ENCODE measurements at regions of chr1 and their contacts with region 1.

Region 1: GRCh38 chr1:116485071-116485735 is 85.6 kb downstream of the CD58 start:
- DNase-seq: peak; percentile 83 to 91 (median 89)
- H3K4me3 ChIP-seq: no peak overlapping the region
- H3K27ac ChIP-seq: peak overlapping the region in 20 of 59 donors; percentile 8 to 71 (median 41)
- H3K27me3 ChIP-seq: no peaks in the 10 kb centered on the region
- CTCF ChIP-seq: peak; percentile 88 to 100 (median 97)

Region 2: DNA sequence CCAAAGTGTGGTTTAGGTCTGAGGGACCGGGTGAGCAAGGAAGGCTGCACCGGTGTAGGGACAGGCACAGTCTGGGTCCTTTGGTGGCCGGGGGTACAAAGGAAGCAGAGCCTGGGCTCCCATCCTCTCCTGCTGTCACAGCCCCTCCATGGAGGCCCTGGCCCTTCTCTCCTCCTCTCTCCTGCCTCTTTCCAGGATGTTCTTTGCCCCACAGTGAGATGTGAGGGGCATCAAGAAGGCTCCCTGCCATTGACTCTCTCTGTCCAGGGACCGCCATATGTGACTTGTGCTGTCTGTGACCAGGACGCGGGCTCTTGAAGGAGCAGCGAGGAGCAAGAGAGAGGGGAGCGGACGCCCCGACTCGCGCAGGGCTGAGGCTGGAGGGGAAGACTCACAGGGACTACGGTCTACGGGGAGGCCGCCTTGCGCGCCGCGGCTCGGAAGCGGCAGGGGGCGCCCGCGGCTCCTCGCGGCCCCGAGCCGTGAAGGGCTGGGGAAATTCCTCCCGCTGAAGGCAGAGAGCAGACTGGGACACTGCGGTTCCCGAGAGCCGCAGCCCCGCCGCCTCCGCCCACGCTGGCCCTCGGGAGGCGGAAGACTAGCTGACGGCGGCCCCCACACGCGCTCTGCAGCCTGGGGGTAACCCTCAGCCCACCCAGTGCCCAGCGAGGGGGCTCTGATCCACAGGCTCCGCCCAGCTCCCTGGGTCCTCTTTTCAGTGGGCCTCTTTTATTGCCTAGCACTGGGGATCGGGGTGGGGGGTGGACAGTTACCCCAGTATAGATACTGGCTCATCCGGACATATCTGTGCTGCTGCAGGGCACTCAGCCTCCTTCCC is 333.2 kb before region 1 on chr1:
- intact Hi-C with region 1: loop called (anchors 5 kb)
- DNase-seq: peak in 9 of 10 donors; percentile 60 to 88 (median 76)
- H3K4me3 ChIP-seq: peak overlapping the region; percentile 29 to 73 (median 59)
- H3K27ac ChIP-seq: peak overlapping the region; percentile 66 to 97 (median 88)
- H3K27me3 ChIP-seq: no peaks in the 10 kb centered on the region
- CTCF ChIP-seq: peak; percentile 71 to 98 (median 94)

Region 3: DNA sequence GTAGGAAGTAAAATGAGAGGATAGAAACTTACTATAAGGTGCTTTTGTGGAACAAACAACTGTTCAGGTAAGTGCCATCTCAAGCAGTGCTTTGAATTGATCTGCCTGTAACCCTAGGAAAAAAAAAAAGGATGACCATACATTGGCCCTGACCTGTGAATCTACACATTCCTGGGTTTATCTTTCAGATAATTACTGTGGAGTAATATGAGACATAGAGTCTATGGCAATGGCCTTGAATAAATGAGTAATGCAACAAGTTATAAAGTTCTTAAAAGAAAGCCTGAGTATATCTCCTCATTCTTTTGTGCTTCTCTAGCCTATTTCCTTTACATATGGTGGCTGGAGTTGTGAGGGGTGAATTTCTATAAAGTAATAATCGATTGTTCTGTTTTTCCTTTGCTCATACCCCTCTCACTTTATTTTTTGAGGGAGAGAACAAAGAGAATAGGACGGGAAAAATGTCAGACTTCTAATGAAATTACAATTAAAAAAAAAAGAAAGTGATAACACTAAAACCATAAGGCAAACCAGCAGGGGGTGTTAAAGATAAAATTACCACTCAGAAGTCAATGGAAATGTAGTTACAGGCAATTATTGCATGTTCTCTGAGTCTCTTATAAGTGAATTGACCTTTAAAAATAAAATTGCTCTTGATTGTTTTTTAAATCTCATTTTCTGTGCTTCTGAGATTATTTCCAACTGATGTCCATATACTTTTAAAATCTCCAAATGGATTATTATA is 124.6 kb before region 1 on chr1:
- intact Hi-C with region 1: loop called in 1 of 2 experiments (anchors 5 kb)
- DNase-seq: no peak
- H3K4me3 ChIP-seq: no peak overlapping the region
- H3K27ac ChIP-seq: peak overlapping the region in 7 of 59 donors; percentile 2 to 63 (median 24)
- H3K27me3 ChIP-seq: no peaks in the 10 kb centered on the region
- CTCF ChIP-seq: peak in 53 of 56 donors; percentile 25 to 72 (median 48)

Region 4: GRCh38 chr1:116377541-116378529 is 107.4 kb before region 1 on chr1:
- intact Hi-C with region 1: loop called (anchors 5 kb)
- DNase-seq: peak; percentile 53 to 90 (median 77)
- H3K4me3 ChIP-seq: peak overlapping the region in 58 of 59 donors; percentile 1 to 97 (median 87)
- H3K27ac ChIP-seq: peak overlapping the region; percentile 45 to 99 (median 95)
- H3K27me3 ChIP-seq: no peaks in the 10 kb centered on the region
- CTCF ChIP-seq: peak in 3 of 56 donors; percentile 9 to 13 (median 10)

Region 5: DNA sequence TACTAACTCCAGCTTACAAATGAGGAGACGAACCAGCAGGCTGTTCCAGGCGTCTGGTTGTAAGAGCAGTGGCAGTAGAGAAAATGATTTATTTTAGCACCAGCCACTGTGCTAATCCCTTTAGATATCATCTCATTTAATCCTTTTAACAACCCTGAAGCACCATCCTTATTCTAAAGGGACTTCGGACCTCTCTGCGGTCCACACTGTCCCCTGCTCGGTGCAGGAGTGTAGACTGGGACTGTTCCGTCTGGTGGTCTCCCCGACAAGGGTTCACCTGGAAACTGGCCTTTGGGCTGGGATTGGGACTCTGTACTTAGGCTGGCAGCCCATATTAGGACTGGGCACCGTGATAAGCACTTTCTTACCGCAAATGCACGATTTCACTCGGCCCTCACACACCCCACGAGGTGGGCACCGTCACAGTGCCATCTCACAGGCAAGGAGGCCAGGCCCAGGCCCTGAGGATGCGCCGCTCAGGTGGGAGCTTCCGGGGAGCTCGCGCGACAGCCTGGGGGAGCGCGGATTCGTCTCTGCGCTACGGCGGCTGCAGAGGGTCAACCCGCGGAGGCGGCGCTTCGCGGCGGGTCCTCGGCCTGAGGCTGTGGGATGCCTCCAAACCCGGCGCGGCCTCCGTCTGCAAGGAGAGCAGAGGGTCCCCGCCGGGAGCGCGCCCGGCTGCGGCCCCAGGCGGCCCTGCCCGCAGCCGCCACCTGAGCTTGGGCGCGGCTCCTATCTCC is 66.9 kb before region 1 on chr1:
- intact Hi-C with region 1: loop called in 1 of 2 experiments (anchors 5 kb)
- DNase-seq: peak; percentile 70 to 89 (median 76)
- H3K4me3 ChIP-seq: peak overlapping the region; percentile 60 to 95 (median 82)
- H3K27ac ChIP-seq: peak overlapping the region; percentile 48 to 98 (median 94)
- H3K27me3 ChIP-seq: no peaks in the 10 kb centered on the region
- CTCF ChIP-seq: peak in 40 of 56 donors; percentile 7 to 55 (median 36)

Region 6: GRCh38 chr1:116433275-116434257 is 51.6 kb before region 1 on chr1:
- intact Hi-C with region 1: loop called in 1 of 2 experiments (anchors 5 kb)
- DNase-seq: peak; percentile 58 to 97 (median 92)
- H3K4me3 ChIP-seq: peak overlapping the region in 8 of 59 donors; percentile 8 to 30 (median 22)
- H3K27ac ChIP-seq: peak overlapping the region; percentile 80 to 99 (median 95)
- H3K27me3 ChIP-seq: no peaks in the 10 kb centered on the region
- CTCF ChIP-seq: peak in 12 of 56 donors; percentile 2 to 32 (median 17)

Region 7: DNA sequence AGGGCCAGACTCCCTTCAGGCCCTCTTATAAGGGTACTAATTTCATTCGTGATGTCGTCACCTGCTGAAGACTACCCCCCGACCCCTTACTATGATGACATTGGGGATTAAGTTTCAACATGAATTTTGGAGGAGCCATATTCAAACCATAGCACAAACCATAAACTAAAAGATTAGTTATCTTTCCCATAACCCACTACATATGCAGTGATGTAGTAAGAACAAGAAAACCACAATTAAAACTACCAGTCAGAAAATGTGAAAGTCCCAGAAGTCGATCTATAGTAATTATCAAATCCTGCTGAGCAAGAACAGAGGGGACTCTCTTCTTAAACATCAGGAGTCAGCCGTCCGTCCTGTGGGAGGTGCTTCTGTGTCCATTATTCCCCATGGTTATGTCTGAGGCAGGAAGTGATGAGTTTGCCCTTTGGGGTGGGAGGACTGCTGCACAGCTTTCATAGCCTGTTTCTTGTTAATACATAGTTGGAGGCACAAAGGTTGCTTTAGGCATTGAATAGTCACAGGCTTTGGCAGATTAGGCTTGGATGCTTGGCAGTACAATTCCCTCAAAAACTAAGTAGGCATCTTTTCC is 388.6 kb after region 1 on chr1:
- intact Hi-C with region 1: no loop called
- DNase-seq: no peak
- H3K4me3 ChIP-seq: no peak overlapping the region
- H3K27ac ChIP-seq: no peak overlapping the region
- H3K27me3 ChIP-seq: peaks cover 0 to 8% (median 0%) of the 10 kb centered on the region in 45 donors
- CTCF ChIP-seq: no peak

Measured in dorsolateral prefrontal cortex (tissue), 120 donors.